Endothelial cell of umbilical vein (primary cell): ENCODE measurements at regions of chr1 and their contacts with region 1.

Region 1: GRCh38 chr1:211285196-211285595 is 26.0 kb downstream of the RCOR3 start:
- DNase-seq: peak; percentile 16
- H3K4me3 ChIP-seq: no peak overlapping the region
- H3K27ac ChIP-seq: no peak overlapping the region
- H3K4me1 ChIP-seq: no peaks in the 10 kb centered on the region
- H3K27me3 ChIP-seq: no peaks in the 10 kb centered on the region
- CTCF ChIP-seq: no peak
- POLR2A ChIP-seq: no peak

Region 2: DNA sequence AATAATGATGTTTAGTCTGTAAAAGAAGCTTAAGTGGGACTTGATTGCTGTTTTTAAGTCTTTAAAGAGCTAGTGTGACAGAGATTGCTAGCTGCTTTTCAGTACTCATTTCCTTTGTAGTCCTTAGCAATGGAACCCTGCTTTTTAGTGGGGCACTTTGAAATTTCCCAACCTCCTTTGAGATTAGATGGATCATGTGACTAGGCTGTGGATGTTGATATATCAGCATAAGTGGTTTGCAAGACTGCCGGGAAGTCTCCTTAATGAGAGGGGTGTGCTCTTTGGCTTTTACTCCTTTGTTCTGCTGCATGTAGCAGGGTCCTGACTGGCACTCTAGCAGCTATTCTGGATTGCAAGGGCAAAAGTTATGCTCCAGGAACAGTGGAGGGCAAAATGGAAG is 37.3 kb before region 1 on chr1:
- CTCF ChIA-PET with region 1: no interaction called
- POLR2A ChIA-PET with region 1: no interaction called
- dilution Hi-C with region 1: no loop called
- intact Hi-C with region 1: no loop called
- DNase-seq: no peak
- H3K4me3 ChIP-seq: no peak overlapping the region
- H3K27ac ChIP-seq: no peak overlapping the region
- H3K4me1 ChIP-seq: no peaks in the 10 kb centered on the region
- H3K27me3 ChIP-seq: no peaks in the 10 kb centered on the region
- CTCF ChIP-seq: no peak
- POLR2A ChIP-seq: no peak

Region 3: DNA sequence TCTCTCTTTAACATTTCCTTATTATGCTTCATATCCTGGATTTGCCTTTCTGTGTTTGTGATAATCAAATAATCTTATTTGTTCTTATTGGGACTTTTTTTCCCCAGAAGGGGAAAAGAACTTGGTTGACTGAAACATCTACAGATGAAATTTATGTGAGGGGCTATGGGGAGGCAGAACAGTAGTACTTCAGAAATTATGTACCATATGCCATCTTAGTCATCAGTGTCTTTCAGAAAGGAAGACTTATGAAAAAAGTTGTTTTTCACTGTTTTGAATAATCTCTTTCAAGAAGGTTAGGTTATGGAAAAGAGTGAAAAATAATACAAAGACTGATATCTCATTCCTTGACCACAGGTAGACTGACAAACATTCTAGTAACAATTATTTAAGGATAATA is 11.2 kb after region 1 on chr1:
- CTCF ChIA-PET with region 1: interaction called, 10 read pairs
- POLR2A ChIA-PET with region 1: no interaction called
- dilution Hi-C with region 1: no loop called
- intact Hi-C with region 1: no loop called
- DNase-seq: no peak
- H3K4me3 ChIP-seq: no peak overlapping the region
- H3K27ac ChIP-seq: no peak overlapping the region
- H3K4me1 ChIP-seq: no peaks in the 10 kb centered on the region
- H3K27me3 ChIP-seq: no peaks in the 10 kb centered on the region
- CTCF ChIP-seq: no peak
- POLR2A ChIP-seq: no peak